H1 (cell line): ENCODE measurements at regions of chr6 and their contacts with region 1.

Region 1: GRCh38 chr6:89679215-89680120 is 40.9 kb upstream of the LYRM2 start:
- DNase-seq: no peak
- H3K4me3 ChIP-seq: peak overlapping the region in 2 of 4 experiments; percentile 10 to 39; a peak in 2 of 8 replicates
- H3K27ac ChIP-seq: 0 out of 2 replicates have a peak overlapping the region, but pooled peaks have one; percentile 23
- H3K4me1 ChIP-seq: peaks cover 12 to 26% (median 20%) of the 10 kb centered on the region in 4 experiments; a peak in 6 of 7 replicates
- H3K27me3 ChIP-seq: no peaks in the 10 kb centered on the region
- CTCF ChIP-seq: no peak
- EP300 ChIP-seq: no peak
- POLR2A ChIP-seq: no peak
- RAD21 ChIP-seq: no peak

Region 2: GRCh38 chr6:89690944-89691324 is 11.5 kb after region 1 on chr6:
- CTCF ChIA-PET with region 1: interaction called, 10 read pairs
- POLR2A ChIA-PET with region 1: interaction called, 10 read pairs
- DNase-seq: no peak
- H3K4me3 ChIP-seq: no peak overlapping the region; a peak in 2 of 8 replicates
- H3K27ac ChIP-seq: peak overlapping the region; percentile 81
- H3K4me1 ChIP-seq: peaks cover 22 to 33% (median 25%) of the 10 kb centered on the region in 4 experiments
- H3K27me3 ChIP-seq: no peaks in the 10 kb centered on the region
- CTCF ChIP-seq: no peak
- EP300 ChIP-seq: no peak
- POLR2A ChIP-seq: no peak; a peak in 1 of 3 replicates
- RAD21 ChIP-seq: no peak